Endothelial cell of umbilical vein (primary cell): ENCODE measurements at regions of chrX and their contacts with region 1.

Region 1: GRCh38 chrX:29903360-29903759 is 312.0 kb upstream of the MAGEB2 start:
- DNase-seq: peak; percentile 9
- H3K4me3 ChIP-seq: no peak overlapping the region
- H3K27ac ChIP-seq: no peak overlapping the region
- H3K4me1 ChIP-seq: no peaks in the 10 kb centered on the region
- H3K27me3 ChIP-seq: no peaks in the 10 kb centered on the region
- CTCF ChIP-seq: peak in 1 of 2 donors; percentile 30
- POLR2A ChIP-seq: no peak

Region 2: GRCh38 chrX:29687687-29688086 is 215.7 kb before region 1 on chrX:
- CTCF ChIA-PET with region 1: interaction called, 18 read pairs
- POLR2A ChIA-PET with region 1: no interaction called
- dilution Hi-C with region 1: no loop called
- intact Hi-C with region 1: no loop called
- DNase-seq: peak; percentile 58
- H3K4me3 ChIP-seq: no peak overlapping the region
- H3K27ac ChIP-seq: no peak overlapping the region
- H3K4me1 ChIP-seq: peaks cover 5% of the 10 kb centered on the region
- H3K27me3 ChIP-seq: no peaks in the 10 kb centered on the region
- CTCF ChIP-seq: no peak
- POLR2A ChIP-seq: no peak

Region 3: GRCh38 chrX:30468471-30468870 is 565.1 kb after region 1 on chrX:
- CTCF ChIA-PET with region 1: no interaction called
- POLR2A ChIA-PET with region 1: no interaction called
- dilution Hi-C with region 1: no loop called
- intact Hi-C with region 1: no loop called
- DNase-seq: no peak
- H3K4me3 ChIP-seq: no peak overlapping the region
- H3K27ac ChIP-seq: no peak overlapping the region
- H3K4me1 ChIP-seq: no peaks in the 10 kb centered on the region
- H3K27me3 ChIP-seq: no peaks in the 10 kb centered on the region
- CTCF ChIP-seq: no peak
- POLR2A ChIP-seq: no peak